ENCODE measurements at regions of chr13 and their contacts with region 1.

Region 1: DNA sequence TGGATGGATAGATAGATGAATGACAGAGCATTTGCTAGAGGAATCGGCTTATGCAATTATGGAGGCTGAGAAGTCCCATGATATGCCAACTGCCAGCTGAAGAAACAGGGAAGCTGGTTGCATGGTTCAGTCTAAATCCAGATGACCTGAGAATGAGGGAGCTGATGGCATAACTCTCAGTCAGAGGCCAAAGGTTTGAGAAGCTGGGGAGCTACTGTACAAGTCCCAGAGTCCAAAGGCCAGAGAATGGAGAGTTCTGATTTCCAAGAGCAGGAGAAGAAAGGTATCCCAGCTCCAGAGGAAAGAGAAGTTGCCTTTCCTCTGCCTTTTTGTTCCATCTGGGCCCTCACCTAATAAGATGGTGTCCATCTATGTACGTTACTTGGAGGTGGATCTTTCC is 108.3 kb downstream of the CDK8 start:
- DNase-seq: no peak
- ATAC-seq: no peak

Region 2: DNA sequence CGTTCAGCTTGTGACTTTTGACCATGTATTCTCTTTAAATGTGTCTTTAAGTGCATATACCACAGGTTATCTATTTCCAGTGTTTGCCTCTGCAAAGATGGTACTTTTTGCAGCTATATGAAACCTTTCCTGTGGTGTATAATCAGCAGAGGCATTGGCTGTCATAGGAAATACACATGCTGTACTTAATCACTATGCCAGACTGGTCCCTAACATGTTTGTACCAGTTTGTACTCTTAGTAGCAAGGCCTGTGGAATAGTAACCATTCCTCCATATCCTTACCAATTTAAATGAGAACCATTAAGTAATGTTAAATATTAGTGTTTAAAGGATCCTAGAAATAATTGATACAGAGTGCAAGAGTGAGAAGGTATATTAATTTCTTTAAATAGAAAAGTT is 38.5 kb before region 1 on chr13:
- intact Hi-C with region 1: loop called (anchors 5 kb)
- DNase-seq: no peak
- ATAC-seq: peak; percentile 36

Measured in Right ventricle myocardium superior (tissue), 1 donor.